ENCODE measurements at regions of chr3 and their contacts with region 1.

Region 1: DNA sequence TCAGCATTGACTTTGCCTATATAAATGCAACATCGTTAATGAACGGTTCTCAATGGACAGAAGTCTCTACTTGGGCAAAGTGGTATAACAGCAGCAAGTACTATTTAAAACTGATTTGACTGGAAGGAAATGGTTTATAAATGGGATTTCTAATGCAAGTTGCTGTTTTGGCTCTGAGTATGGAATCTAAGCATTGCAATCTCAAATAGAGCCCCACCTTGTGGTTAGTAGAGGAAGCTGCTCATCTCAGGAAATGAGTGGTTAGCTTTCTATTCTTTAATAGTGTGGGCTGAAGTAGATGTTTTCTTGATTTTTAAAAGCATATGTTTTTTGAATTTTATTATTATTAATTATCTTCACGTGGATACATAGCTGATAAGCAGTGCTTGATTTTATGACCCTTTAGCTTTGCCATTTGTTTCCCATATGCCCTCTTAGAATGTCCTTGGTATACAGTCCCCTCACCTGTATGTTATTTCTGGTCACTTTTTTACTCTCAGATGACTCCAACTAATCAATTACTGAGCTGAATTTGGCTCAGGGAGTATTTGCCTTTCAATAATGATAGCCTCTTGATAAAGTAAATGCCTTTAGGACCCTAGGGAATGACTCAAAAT is 67.1 kb downstream of the OXSM start:
- DNase-seq: no peak
- ATAC-seq: peak; percentile 61 to 86 (median 80)
- H3K4me3 ChIP-seq: no peak overlapping the region
- H3K27ac ChIP-seq: no peak overlapping the region
- H3K4me1 ChIP-seq: no peaks in the 10 kb centered on the region
- H3K27me3 ChIP-seq: no peaks in the 10 kb centered on the region
- CTCF ChIP-seq: peak; percentile 28 to 68 (median 46)

Region 2: DNA sequence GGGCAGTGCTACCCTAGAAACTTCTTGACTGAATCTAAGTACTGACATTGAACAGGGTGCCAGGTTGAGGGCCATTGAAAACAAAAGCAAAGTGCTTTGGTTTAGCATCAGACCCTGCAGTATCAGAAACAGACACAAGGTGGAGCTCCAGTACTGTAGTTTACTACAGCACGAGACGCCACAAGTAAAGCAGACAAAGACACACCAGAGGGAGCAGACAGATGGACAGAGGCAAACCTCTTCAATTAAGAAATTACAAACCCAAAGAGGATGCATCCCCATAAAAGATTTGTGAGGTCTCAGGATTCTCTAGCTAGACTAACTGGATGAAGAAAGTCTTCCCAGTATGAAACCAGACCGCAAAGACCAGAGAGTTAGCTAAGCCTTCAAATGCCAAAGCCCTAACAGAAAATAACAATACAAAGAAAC is 208.9 kb before region 1 on chr3:
- intact Hi-C with region 1: loop called in 1 of 3 experiments (anchors 5 kb)
- DNase-seq: peak in 4 of 6 donors; percentile 56 to 83 (median 57)
- ATAC-seq: peak; percentile 83 to 99 (median 96)
- H3K4me3 ChIP-seq: no peak overlapping the region
- H3K27ac ChIP-seq: no peak overlapping the region
- H3K4me1 ChIP-seq: peaks cover 3 to 10% (median 5%) of the 10 kb centered on the region in 3 donors
- H3K27me3 ChIP-seq: no peaks in the 10 kb centered on the region
- CTCF ChIP-seq: peak; percentile 66 to 87 (median 73)

Measured in pancreas (tissue), 10 donors.